Sigmoid colon (tissue), 7 donors: ENCODE measurements at regions of chr17 and their contacts with region 1.

Region 1: DNA sequence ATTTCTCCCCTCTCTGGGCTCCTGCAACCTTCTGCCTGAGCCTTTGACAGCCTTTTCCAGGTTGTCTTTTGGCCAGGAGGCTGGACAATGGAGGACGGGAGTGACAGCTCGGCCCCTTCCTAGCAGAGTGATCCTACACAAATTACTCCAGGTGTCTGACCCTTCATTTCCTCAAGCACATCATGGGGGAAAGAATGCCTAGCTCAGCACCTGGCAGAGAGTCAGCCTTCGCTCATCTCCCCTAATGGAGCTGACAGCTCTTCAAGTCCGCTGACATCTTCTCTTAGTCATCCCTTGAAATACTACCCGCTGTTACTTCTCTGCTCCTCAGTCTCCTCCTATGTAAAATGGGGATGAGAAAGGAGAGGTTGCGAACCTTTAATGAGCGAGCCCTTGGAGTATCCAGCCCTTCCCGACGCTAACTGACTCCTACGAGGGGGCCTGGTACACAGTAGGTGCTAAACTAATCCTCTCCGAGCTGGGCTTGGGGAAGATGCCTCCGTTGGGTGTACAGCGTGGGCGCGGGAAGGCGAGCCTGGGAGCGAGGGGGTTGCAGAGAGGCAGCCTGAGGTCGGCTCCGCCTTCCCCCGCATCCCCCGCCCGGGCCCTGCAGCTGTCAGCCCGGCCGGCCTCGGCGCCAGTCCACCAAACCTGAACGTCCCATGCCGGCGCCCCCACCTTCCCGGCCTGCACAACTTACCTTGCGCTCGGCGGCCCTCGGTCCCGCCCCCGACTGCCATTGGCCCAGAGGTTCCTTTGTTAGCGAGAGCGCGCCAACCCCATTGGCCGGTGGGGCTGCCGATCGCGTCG is 481 bp upstream of the MPRIP start:
- DNase-seq: peak; percentile 99
- H3K4me3 ChIP-seq: peak overlapping the region; percentile 30 to 79 (median 76)
- H3K27ac ChIP-seq: peak overlapping the region; percentile 74 to 83 (median 76)
- H3K4me1 ChIP-seq: peaks cover 0 to 48% (median 44%) of the 10 kb centered on the region in 4 donors
- H3K27me3 ChIP-seq: no peaks in the 10 kb centered on the region
- CTCF ChIP-seq: no peak
- EP300 ChIP-seq: no peak
- POLR2A ChIP-seq: no peak

Region 2: DNA sequence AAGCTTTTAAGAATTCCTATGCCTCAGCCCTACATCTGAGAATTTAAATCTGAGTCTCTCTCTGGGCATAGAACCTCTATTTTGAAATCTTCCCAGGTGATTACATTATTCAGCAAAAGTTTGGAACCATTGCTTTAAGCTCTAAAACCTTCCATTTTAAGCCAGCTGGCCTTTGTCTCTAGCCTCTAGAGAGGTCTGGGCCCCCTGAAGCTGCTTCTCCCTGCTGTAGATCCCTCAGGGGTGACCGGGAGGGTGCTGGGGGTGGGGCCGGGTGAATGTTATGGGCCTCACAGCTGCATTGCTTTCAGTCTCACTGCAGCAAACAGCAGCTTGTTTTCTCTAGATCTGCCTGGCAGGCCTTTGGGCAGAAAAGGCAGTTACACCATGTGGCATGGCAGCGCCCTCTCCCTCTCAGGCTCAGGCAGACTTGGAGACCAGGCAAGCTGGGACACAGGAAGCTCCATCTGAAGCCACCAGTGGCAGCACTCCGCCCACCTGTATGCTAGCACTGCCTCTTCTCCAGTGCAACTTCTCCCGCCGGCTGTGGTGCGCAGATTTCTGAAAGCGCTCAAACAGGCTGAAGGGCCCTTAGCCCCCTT is 66.8 kb after region 1 on chr17:
- intact Hi-C with region 1: loop called (anchors 5 kb)
- DNase-seq: no peak
- H3K4me3 ChIP-seq: no peak overlapping the region
- H3K27ac ChIP-seq: peak overlapping the region; percentile 23 to 58 (median 52)
- H3K4me1 ChIP-seq: peaks cover 0 to 67% (median 60%) of the 10 kb centered on the region in 4 donors
- H3K27me3 ChIP-seq: no peaks in the 10 kb centered on the region
- CTCF ChIP-seq: no peak
- EP300 ChIP-seq: no peak
- POLR2A ChIP-seq: no peak